H1 (cell line): ENCODE measurements at regions of chr1 and their contacts with region 1.

Region 1: GRCh38 chr1:87335175-87335884 is 6.7 kb downstream of the LMO4 start:
- DNase-seq: peak in 1 of 2 experiments; percentile 67
- H3K4me3 ChIP-seq: peak overlapping the region; percentile 54 to 82 (median 54)
- H3K27ac ChIP-seq: peak overlapping the region; percentile 81
- H3K4me1 ChIP-seq: peaks cover 2 to 22% (median 18%) of the 10 kb centered on the region in 4 experiments; a peak in 6 of 7 replicates
- H3K27me3 ChIP-seq: no peaks in the 10 kb centered on the region
- CTCF ChIP-seq: no peak
- EP300 ChIP-seq: no peak
- POLR2A ChIP-seq: peak; percentile 43 to 48
- RAD21 ChIP-seq: no peak

Region 2: GRCh38 chr1:87148661-87149060 is 186.7 kb before region 1 on chr1:
- CTCF ChIA-PET with region 1: no interaction called
- POLR2A ChIA-PET with region 1: no interaction called
- DNase-seq: no peak
- H3K4me3 ChIP-seq: no peak overlapping the region
- H3K27ac ChIP-seq: no peak overlapping the region
- H3K4me1 ChIP-seq: peaks cover 2 to 28% (median 13%) of the 10 kb centered on the region in 4 experiments
- H3K27me3 ChIP-seq: peaks cover 0 to 3% (median 1%) of the 10 kb centered on the region in 4 experiments; a peak in 3 of 7 replicates
- CTCF ChIP-seq: no peak
- EP300 ChIP-seq: no peak
- POLR2A ChIP-seq: no peak
- RAD21 ChIP-seq: no peak

Region 3: DNA sequence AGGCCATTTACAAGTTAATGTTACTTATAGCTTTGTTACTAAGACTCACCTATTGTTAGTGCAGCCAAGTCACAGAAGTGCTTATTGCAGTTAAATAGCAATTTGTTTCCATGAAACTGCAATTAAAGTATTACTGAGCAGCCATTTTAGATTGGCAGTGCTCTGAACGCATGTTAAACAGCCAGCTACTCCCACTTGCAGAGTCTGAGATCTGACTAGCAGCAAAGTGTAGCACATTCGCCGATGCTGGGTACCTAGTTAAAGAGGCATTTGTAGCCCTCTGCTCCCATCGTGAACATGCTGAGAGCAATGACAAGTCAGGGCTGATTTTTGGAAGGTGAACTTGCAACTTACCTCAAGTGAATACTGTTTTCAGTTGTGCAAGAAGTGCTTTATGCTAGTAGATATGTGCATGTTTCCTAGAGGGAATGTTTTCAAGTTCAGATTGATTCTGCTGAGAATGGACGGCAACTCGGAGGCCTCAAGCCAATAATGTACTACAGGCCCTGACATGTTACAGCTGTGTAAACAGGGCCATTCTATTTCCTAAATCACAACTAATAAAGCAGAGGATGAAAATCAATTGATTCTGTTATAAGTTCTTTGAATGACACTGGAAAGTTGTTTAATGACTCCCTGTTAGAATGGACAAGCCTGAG is 13.1 kb after region 1 on chr1:
- CTCF ChIA-PET with region 1: interaction called, 12 read pairs
- POLR2A ChIA-PET with region 1: interaction called, 184 read pairs
- DNase-seq: no peak
- H3K4me3 ChIP-seq: no peak overlapping the region
- H3K27ac ChIP-seq: no peak overlapping the region
- H3K4me1 ChIP-seq: peaks cover 0 to 7% (median 2%) of the 10 kb centered on the region in 4 experiments; a peak in 3 of 7 replicates
- H3K27me3 ChIP-seq: no peaks in the 10 kb centered on the region
- CTCF ChIP-seq: no peak
- EP300 ChIP-seq: no peak
- POLR2A ChIP-seq: no peak
- RAD21 ChIP-seq: no peak